K562 (cell line): ENCODE measurements at regions of chr22 and their contacts with region 1.

Region 1: GRCh38 chr22:26404851-26405421 is 24.1 kb upstream of the ASPHD2 start:
- DNase-seq: peak; percentile 44 to 85 (median 57)
- ATAC-seq: peak; percentile 92
- H3K4me3 ChIP-seq: no peak overlapping the region
- H3K27ac ChIP-seq: peak overlapping the region; percentile 81
- H3K4me1 ChIP-seq: peaks cover 13 to 40% of the 10 kb centered on the region in 2 experiments
- H3K27me3 ChIP-seq: no peaks in the 10 kb centered on the region
- CTCF ChIP-seq: no peak
- EP300 ChIP-seq: peak; percentile 96
- POLR2A ChIP-seq: no peak
- RAD21 ChIP-seq: peak in 1 of 2 experiments; percentile 23; a peak in 1 of 4 replicates

Region 2: GRCh38 chr22:26385164-26385563 is 19.8 kb before region 1 on chr22:
- CTCF ChIA-PET with region 1: no interaction called
- POLR2A ChIA-PET with region 1: no interaction called
- in situ Hi-C with region 1: no loop called
- intact Hi-C with region 1: no loop called
- DNase-seq: no peak
- ATAC-seq: no peak
- H3K4me3 ChIP-seq: no peak overlapping the region
- H3K27ac ChIP-seq: no peak overlapping the region
- H3K4me1 ChIP-seq: no peaks in the 10 kb centered on the region
- H3K27me3 ChIP-seq: peaks cover 2 to 5% of the 10 kb centered on the region in 2 experiments; a peak in 3 of 5 replicates
- CTCF ChIP-seq: no peak
- EP300 ChIP-seq: no peak
- POLR2A ChIP-seq: no peak
- RAD21 ChIP-seq: no peak

Region 3: DNA sequence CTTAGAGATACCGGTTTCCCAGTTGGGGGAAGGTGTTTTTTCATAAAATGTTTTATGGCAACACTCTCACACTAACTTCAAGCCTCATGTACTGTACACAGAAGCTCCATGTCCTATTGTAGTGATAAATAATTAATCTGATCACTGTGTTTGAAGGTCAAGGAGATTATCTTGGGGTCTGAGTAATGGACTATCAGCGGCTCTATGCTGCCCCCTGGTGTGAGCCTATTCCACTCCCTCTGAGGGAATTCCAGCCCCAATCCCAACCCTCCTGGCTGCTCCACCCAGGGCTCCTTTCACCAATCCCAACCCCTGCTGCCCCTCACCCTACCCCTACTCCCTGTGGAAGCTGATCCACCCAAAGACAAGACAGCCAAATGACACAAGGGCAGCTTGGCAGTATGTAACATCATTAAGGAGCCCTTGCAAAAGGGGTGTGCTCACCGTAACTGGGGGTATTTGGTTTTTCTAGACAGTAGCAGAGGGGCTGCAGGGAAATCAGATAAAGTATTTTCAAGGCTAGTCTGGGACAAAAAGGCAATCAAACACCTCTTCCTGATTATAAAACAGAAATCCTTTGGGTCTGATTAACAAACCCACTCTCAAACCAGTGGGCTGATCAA is 56.4 kb after region 1 on chr22:
- CTCF ChIA-PET with region 1: interaction called, 57 read pairs
- POLR2A ChIA-PET with region 1: interaction called, 8 read pairs
- in situ Hi-C with region 1: loop called (anchors 5 kb)
- intact Hi-C with region 1: no loop called
- DNase-seq: peak; percentile 51 to 55 (median 52)
- ATAC-seq: peak; percentile 89
- H3K4me3 ChIP-seq: no peak overlapping the region
- H3K27ac ChIP-seq: no peak overlapping the region
- H3K4me1 ChIP-seq: peaks cover 0 to 5% of the 10 kb centered on the region in 2 experiments; a peak in 3 of 5 replicates
- H3K27me3 ChIP-seq: no peaks in the 10 kb centered on the region
- CTCF ChIP-seq: peak; percentile 70 to 79 (median 77)
- EP300 ChIP-seq: no peak
- POLR2A ChIP-seq: no peak
- RAD21 ChIP-seq: peak; percentile 65 to 85